HEK293T (cell line): ENCODE measurements at regions of chr3 and their contacts with region 1.

Region 1: GRCh38 chr3:141127344-141128125 is 76.4 kb downstream of the SPSB4 start:
- DNase-seq: no peak

Region 2: GRCh38 chr3:141114816-141115460 is 12.6 kb before region 1 on chr3:
- CTCF ChIA-PET with region 1: interaction called, 10 read pairs
- POLR2A ChIA-PET with region 1: no interaction called
- DNase-seq: peak; percentile 64